ENCODE measurements at regions of chr2 and their contacts with region 1.

Region 1: DNA sequence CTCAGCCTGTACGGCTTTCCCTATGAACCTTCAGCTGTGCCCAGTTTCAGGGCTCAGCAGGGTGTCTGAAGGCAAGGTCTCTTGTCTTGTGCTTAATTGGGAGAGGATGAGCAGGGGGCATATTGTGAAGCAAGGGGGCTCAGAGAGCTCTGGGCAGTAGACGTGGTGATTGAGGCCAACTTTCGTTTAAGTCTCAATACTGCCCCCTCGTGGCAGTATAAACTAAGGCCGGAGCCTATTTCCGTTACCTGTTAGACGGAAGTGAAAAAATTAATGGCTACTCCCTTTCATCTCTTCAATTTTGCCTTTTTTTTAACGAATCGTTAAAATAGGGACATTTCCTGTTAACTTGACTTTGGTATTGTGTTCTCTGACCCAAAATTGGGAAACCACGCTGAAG is 193.4 kb downstream of the TDRD15 start:
- DNase-seq: peak; percentile 15 to 69
- H3K4me3 ChIP-seq: no peak overlapping the region
- H3K27ac ChIP-seq: no peak overlapping the region
- H3K4me1 ChIP-seq: no peaks in the 10 kb centered on the region
- H3K27me3 ChIP-seq: no peaks in the 10 kb centered on the region
- CTCF ChIP-seq: peak in 2 of 3 experiments; percentile 68 to 70; a peak in 3 of 4 replicates
- EP300 ChIP-seq: no peak
- POLR2A ChIP-seq: no peak
- RAD21 ChIP-seq: peak; percentile 68 to 80

Region 2: GRCh38 chr2:21042958-21043743 is 274.0 kb before region 1 on chr2:
- CTCF ChIA-PET with region 1: interaction called, 43 read pairs
- POLR2A ChIA-PET with region 1: no interaction called
- DNase-seq: peak; percentile 38 to 89
- H3K4me3 ChIP-seq: peak overlapping the region; percentile 40 to 68 (median 52)
- H3K27ac ChIP-seq: no peak overlapping the region
- H3K4me1 ChIP-seq: peaks cover 0 to 10% (median 9%) of the 10 kb centered on the region in 4 experiments
- H3K27me3 ChIP-seq: peaks cover 1 to 12% (median 9%) of the 10 kb centered on the region in 4 experiments; a peak in 6 of 7 replicates
- CTCF ChIP-seq: peak; percentile 88 to 96 (median 90)
- EP300 ChIP-seq: no peak
- POLR2A ChIP-seq: no peak
- RAD21 ChIP-seq: peak; percentile 96 to 100

Region 3: DNA sequence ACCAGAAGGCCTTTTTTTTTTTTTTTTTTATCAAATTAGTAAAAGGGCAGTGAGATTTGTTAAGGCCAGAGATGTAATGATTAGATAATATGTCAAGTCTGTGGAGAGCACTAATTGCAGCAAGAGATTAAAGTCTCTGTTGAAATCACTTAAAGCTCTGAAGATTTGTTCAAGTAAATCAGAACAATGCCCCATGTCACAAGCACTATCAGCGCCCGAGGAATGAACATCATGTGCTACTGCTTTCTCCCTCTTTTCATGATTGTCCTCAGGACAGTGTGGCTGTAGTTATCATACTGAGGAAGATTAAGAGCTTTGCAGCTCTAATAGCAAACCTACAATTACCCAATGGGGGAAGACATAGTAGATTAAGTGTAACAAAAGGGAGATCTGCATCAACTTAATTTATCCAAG is 122.3 kb before region 1 on chr2:
- CTCF ChIA-PET with region 1: interaction called, 11 read pairs
- POLR2A ChIA-PET with region 1: no interaction called
- DNase-seq: no peak
- H3K4me3 ChIP-seq: no peak overlapping the region
- H3K27ac ChIP-seq: no peak overlapping the region
- H3K4me1 ChIP-seq: no peaks in the 10 kb centered on the region
- H3K27me3 ChIP-seq: no peaks in the 10 kb centered on the region
- CTCF ChIP-seq: no peak
- EP300 ChIP-seq: no peak
- POLR2A ChIP-seq: no peak
- RAD21 ChIP-seq: no peak

Region 4: GRCh38 chr2:21261591-21261990 is 55.5 kb before region 1 on chr2:
- CTCF ChIA-PET with region 1: interaction called, 22 read pairs
- POLR2A ChIA-PET with region 1: no interaction called
- DNase-seq: no peak
- H3K4me3 ChIP-seq: no peak overlapping the region
- H3K27ac ChIP-seq: no peak overlapping the region
- H3K4me1 ChIP-seq: peaks cover 0 to 5% (median 0%) of the 10 kb centered on the region in 4 experiments; a peak in 1 of 7 replicates
- H3K27me3 ChIP-seq: no peaks in the 10 kb centered on the region
- CTCF ChIP-seq: no peak
- EP300 ChIP-seq: no peak
- POLR2A ChIP-seq: no peak
- RAD21 ChIP-seq: no peak

Region 5: DNA sequence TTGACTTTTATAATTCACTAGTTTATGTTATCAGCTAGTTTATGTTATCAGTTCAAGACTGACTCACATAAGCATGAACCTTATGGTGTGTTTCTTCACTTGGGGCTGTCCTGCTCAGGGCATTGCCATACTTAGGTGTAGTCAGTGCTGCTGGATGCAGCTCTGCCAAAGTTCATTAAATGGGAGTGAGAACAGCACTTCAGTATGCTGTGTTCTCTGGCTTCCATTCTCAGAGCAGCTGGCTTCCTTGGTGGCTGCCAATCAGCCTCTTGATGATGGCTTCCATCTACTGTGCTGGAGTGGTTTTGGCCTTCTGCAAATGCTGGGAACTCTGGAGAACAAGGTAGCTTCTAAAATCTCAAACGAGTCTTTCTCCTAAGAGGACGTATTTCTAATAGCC is 22.7 kb before region 1 on chr2:
- CTCF ChIA-PET with region 1: interaction called, 37 read pairs
- POLR2A ChIA-PET with region 1: no interaction called
- DNase-seq: no peak
- H3K4me3 ChIP-seq: no peak overlapping the region
- H3K27ac ChIP-seq: no peak overlapping the region
- H3K4me1 ChIP-seq: no peaks in the 10 kb centered on the region
- H3K27me3 ChIP-seq: no peaks in the 10 kb centered on the region
- CTCF ChIP-seq: no peak
- EP300 ChIP-seq: no peak
- POLR2A ChIP-seq: no peak
- RAD21 ChIP-seq: no peak

Region 6: GRCh38 chr2:21346984-21347383 is 29.9 kb after region 1 on chr2:
- CTCF ChIA-PET with region 1: interaction called, 19 read pairs
- POLR2A ChIA-PET with region 1: no interaction called
- DNase-seq: no peak
- H3K4me3 ChIP-seq: no peak overlapping the region
- H3K27ac ChIP-seq: no peak overlapping the region
- H3K4me1 ChIP-seq: no peaks in the 10 kb centered on the region
- H3K27me3 ChIP-seq: no peaks in the 10 kb centered on the region
- CTCF ChIP-seq: no peak
- EP300 ChIP-seq: no peak
- POLR2A ChIP-seq: no peak
- RAD21 ChIP-seq: no peak

Measured in H1 (cell line).